ENCODE measurements at regions of chr10 and their contacts with region 1.

Region 1: DNA sequence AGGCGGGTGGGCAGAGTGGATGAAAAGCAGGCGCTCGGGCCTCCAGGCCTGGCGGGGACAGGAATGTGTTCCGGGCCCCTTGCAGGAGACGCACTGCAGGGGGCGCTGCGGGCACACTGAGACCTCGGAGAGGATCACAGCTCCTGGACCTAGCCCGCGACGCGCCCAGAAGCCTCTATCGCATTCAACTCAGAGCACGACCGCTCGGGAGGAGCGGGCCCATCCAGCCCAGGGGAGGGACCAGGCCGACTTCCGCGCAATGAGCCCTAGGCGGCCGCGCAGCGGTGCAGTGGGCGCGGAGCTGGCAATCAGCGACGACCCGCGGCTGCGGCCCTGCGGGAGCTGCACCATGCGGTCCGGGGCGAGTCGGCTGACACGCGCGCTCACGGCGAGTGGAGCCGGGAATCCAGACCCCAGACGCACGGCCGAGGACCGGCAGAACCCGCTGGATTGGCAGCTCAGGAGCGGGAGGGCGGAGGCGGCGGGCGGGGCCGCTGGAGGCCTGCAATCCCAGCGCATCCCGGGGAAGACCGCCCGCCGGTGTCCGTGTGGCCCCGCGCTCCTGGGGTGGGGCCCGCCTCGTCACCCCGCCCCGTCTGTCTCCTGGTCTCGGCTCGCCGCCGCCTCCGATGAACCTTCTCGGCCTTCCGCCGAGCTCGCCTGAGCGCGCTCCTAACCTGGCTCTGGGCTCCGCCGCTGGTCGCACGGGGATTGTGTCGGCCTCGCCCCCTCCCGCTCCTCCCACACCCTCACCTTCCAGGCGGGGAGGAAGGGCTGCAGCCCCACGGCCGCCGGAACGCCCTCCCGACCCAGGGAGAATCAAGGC is 33.5 kb upstream of the GRID1 start:
- DNase-seq: peak; percentile 98
- H3K4me3 Mint-ChIP-seq: peak overlapping the region; percentile 87
- H3K27ac Mint-ChIP-seq: peak overlapping the region; percentile 87
- H3K4me1 Mint-ChIP-seq: peaks cover 15% of the 10 kb centered on the region
- H3K27me3 Mint-ChIP-seq: no peaks in the 10 kb centered on the region

Region 2: GRCh38 chr10:86419101-86419500 is 19.0 kb after region 1 on chr10:
- CTCF ChIA-PET with region 1: interaction called, 55 read pairs
- intact Hi-C with region 1: loop called (anchors 2 kb)
- DNase-seq: peak; percentile 35
- H3K4me3 Mint-ChIP-seq: no peak overlapping the region
- H3K27ac Mint-ChIP-seq: no peak overlapping the region
- H3K4me1 Mint-ChIP-seq: peaks cover 24% of the 10 kb centered on the region
- H3K27me3 Mint-ChIP-seq: no peaks in the 10 kb centered on the region

Region 3: DNA sequence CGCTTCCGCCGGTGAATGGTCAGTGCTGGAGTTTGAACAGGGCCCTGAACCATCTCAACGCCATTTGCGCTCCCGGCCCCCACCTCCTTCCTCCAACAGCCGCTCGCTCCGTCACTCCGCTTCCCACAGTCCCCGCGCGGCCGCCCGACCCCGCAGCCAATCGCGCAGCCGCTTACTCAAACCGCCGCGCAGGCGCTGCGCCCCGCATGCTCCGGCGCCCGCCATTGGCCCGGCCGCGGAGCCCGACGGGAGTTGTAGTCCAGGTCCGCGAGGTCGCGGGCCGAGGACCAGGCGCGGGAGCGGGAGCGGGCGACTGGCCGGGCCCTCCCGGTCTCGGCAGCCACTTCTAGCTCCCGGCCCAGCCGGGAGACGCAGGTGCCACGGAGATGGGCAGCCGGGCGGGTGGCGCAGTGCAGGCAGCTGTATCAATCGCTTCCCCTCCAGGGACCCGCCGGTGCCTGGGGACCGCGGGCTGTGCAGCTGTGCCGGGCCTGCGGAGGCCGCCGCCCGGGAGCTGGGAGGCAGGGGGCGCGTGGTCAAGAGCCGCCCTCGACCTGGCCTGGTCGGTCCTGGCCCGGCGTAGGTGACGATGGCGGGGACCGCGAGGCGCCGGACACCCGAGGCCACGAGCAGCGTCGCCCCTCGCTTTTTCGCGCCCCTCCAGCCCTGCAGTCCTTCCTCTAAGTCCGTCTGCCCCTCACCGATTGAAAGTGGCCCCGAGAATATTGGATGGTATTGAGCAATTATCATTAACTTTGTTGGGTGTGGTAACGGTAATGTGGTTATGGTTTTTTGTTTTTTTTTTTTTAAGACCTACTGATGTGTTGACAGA is 121.8 kb after region 1 on chr10 and contains the start of gene WAPL:
- CTCF ChIA-PET with region 1: interaction called, 14 read pairs
- intact Hi-C with region 1: loop called (anchors 1 kb)
- DNase-seq: peak; percentile 95
- H3K4me3 Mint-ChIP-seq: peak within 1 kb of the TSS; percentile 99
- H3K27ac Mint-ChIP-seq: peak within 1 kb of the TSS; percentile 89
- H3K4me1 Mint-ChIP-seq: peaks cover 57% of the 10 kb centered on the region
- H3K27me3 Mint-ChIP-seq: no peaks in the 10 kb centered on the region
- total RNA-seq, gene WAPL: 30.2 to 33.5 TPM

Region 4: DNA sequence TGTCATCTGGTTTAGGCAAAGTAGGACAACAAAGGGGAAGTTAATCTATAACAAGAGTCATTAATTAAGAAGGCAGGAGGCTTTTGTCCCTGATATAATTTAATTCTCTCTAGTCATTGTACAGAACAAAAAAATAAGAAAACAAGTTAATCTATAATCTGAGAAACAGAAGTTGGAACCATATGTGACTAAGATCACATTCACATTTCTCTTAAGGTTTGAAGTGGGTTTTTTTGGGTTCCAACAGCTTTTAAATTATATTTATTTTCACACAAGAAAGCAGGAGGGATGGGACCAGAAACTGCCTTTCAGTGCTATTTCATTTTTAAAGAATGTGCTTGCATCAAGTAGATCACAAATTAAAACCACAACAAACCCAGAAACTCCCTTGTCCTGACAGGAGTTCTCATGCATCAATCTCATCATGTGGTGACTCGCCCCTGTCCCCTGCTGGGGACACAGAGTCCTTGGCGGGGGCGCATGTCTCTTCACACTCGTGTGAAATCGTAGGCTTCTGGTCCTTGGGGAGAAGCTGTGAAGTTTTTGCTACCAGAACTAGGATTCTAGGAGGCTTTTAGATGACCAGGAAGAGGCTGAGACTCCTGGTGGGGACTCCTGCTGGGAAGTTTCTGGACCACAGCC is 244.2 kb after region 1 on chr10:
- CTCF ChIA-PET with region 1: no interaction called
- intact Hi-C with region 1: loop called (anchors 1 kb)
- DNase-seq: peak; percentile 32
- H3K4me3 Mint-ChIP-seq: no peak overlapping the region
- H3K27ac Mint-ChIP-seq: no peak overlapping the region
- H3K4me1 Mint-ChIP-seq: peaks cover 8% of the 10 kb centered on the region
- H3K27me3 Mint-ChIP-seq: peaks cover 10% of the 10 kb centered on the region

Region 5: GRCh38 chr10:86899670-86900276 is 499.7 kb after region 1 on chr10:
- CTCF ChIA-PET with region 1: no interaction called
- intact Hi-C with region 1: loop called (anchors 5 kb)
- DNase-seq: peak; percentile 63
- H3K4me3 Mint-ChIP-seq: no peak overlapping the region
- H3K27ac Mint-ChIP-seq: no peak overlapping the region
- H3K4me1 Mint-ChIP-seq: no peaks in the 10 kb centered on the region
- H3K27me3 Mint-ChIP-seq: no peaks in the 10 kb centered on the region